IMR-90 (cell line): ENCODE measurements at regions of chr3 and their contacts with region 1.

Region 1: GRCh38 chr3:186108941-186109865 is at the start of gene ETV5:
- DNase-seq: peak; percentile 99
- ATAC-seq: peak; percentile 90
- H3K4me3 ChIP-seq: peak within 1 kb of the TSS; percentile 99
- H3K27ac ChIP-seq: peak within 1 kb of the TSS; percentile 89
- H3K4me1 ChIP-seq: peaks cover 8% of the 10 kb centered on the region
- H3K27me3 ChIP-seq: peaks cover 6% of the 10 kb centered on the region
- CTCF ChIP-seq: 0 out of 2 replicates have a peak, but pooled peaks have one; percentile 1
- POLR2A ChIP-seq: peak; percentile 97
- RAD21 ChIP-seq: no peak
- total RNA-seq, gene ETV5: 20.1 and 25.3 TPM in 2 replicates

Region 2: DNA sequence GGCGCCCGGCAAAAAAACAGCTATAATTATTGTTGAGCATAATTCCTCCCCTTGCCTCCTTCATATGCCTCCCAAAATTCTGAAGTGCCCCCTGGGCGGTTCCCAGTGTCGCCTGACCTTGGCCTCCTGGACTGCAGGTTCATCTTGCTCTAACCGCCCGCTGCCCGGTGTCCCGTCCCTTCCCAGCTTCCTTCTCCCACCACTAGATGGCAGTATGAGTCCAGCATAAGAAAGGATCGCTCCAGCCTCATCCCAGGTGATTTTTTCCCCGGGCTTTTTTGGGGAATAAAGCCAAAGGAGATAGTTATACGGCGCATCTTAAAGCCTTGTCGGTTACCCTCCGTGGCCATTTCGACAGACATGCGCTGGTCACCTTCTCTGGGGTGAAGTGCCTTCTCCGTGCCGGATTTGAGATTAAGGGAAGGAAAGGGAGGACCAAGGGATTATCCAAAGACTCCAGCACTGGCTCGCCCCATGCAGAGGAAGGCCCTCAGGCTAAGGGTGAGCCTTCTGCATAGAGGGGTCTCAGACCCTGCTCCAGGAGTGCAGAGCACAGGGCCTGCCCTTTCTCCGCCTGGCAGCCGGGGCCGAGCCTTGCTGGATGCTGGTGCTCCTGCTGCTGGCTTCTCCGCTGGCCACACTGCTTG is 125.6 kb before region 1 on chr3:
- CTCF ChIA-PET with region 1: no interaction called
- POLR2A ChIA-PET with region 1: no interaction called
- dilution Hi-C with region 1: no loop called
- in situ Hi-C with region 1: no loop called
- intact Hi-C with region 1: loop called (anchors 2 kb)
- DNase-seq: peak; percentile 62
- ATAC-seq: peak; percentile 93
- H3K4me3 ChIP-seq: no peak overlapping the region
- H3K27ac ChIP-seq: no peak overlapping the region
- H3K4me1 ChIP-seq: 0 out of 2 replicates have a peak, but pooled peaks cover 2% of the 10 kb centered on the region
- H3K27me3 ChIP-seq: no peaks in the 10 kb centered on the region; the same call in 1 of the 2 replicates
- CTCF ChIP-seq: peak; percentile 91
- POLR2A ChIP-seq: no peak
- RAD21 ChIP-seq: peak; percentile 97

Region 3: GRCh38 chr3:186241910-186242821 is 133.0 kb after region 1 on chr3:
- CTCF ChIA-PET with region 1: no interaction called
- POLR2A ChIA-PET with region 1: no interaction called
- dilution Hi-C with region 1: no loop called
- in situ Hi-C with region 1: no loop called
- intact Hi-C with region 1: loop called (anchors 5 kb)
- DNase-seq: peak; percentile 82
- ATAC-seq: peak; percentile 96
- H3K4me3 ChIP-seq: no peak overlapping the region
- H3K27ac ChIP-seq: no peak overlapping the region
- H3K4me1 ChIP-seq: 0 out of 2 replicates have a peak, but pooled peaks cover 2% of the 10 kb centered on the region
- H3K27me3 ChIP-seq: peaks cover 2% of the 10 kb centered on the region; the same call in 1 of the 2 replicates
- CTCF ChIP-seq: peak; percentile 61
- POLR2A ChIP-seq: no peak
- RAD21 ChIP-seq: peak; percentile 73

Region 4: GRCh38 chr3:186259612-186260383 is 150.6 kb after region 1 on chr3:
- CTCF ChIA-PET with region 1: no interaction called
- POLR2A ChIA-PET with region 1: no interaction called
- dilution Hi-C with region 1: no loop called
- in situ Hi-C with region 1: no loop called
- intact Hi-C with region 1: loop called (anchors 5 kb)
- DNase-seq: peak; percentile 73
- ATAC-seq: peak; percentile 99
- H3K4me3 ChIP-seq: peak overlapping the region; percentile 6; the same call in 1 of the 2 replicates
- H3K27ac ChIP-seq: no peak overlapping the region
- H3K4me1 ChIP-seq: no peaks in the 10 kb centered on the region
- H3K27me3 ChIP-seq: peaks cover 14% of the 10 kb centered on the region
- CTCF ChIP-seq: peak; percentile 79
- POLR2A ChIP-seq: no peak
- RAD21 ChIP-seq: peak; percentile 74

Region 5: GRCh38 chr3:186570096-186570940 is 461.1 kb after region 1 on chr3 and contains the start of gene DNAJB11:
- CTCF ChIA-PET with region 1: no interaction called
- POLR2A ChIA-PET with region 1: no interaction called
- dilution Hi-C with region 1: no loop called
- in situ Hi-C with region 1: no loop called
- intact Hi-C with region 1: loop called (anchors 5 kb)
- DNase-seq: peak; percentile 100
- ATAC-seq: peak; percentile 91
- H3K4me3 ChIP-seq: peak within 1 kb of the TSS; percentile 81
- H3K27ac ChIP-seq: peak within 1 kb of the TSS; percentile 58
- H3K4me1 ChIP-seq: peaks cover 6% of the 10 kb centered on the region; the same call in 1 of the 2 replicates
- H3K27me3 ChIP-seq: no peaks in the 10 kb centered on the region
- CTCF ChIP-seq: no peak
- POLR2A ChIP-seq: peak; percentile 88
- RAD21 ChIP-seq: no peak
- total RNA-seq, gene DNAJB11: 27.4 and 62.8 TPM in 2 replicates

Region 6: GRCh38 chr3:186783073-186783730 is 674.0 kb after region 1 on chr3 and contains the start of gene EIF4A2:
- CTCF ChIA-PET with region 1: no interaction called
- POLR2A ChIA-PET with region 1: no interaction called
- dilution Hi-C with region 1: no loop called
- in situ Hi-C with region 1: no loop called
- intact Hi-C with region 1: loop called (anchors 10 kb)
- DNase-seq: peak; percentile 86
- ATAC-seq: peak; percentile 84
- H3K4me3 ChIP-seq: peak within 1 kb of the TSS; percentile 80
- H3K27ac ChIP-seq: peak within 1 kb of the TSS; percentile 93
- H3K4me1 ChIP-seq: no peaks in the 10 kb centered on the region; the same call in 1 of the 2 replicates
- H3K27me3 ChIP-seq: no peaks in the 10 kb centered on the region
- CTCF ChIP-seq: no peak
- POLR2A ChIP-seq: peak; percentile 100
- RAD21 ChIP-seq: no peak
- total RNA-seq, gene EIF4A2: 310 and 449 TPM in 2 replicates